ENCODE measurements at regions of chr5 and their contacts with region 1.

Region 1: GRCh38 chr5:113513384-113514288 is at the start of gene YTHDC2:
- DNase-seq: peak; percentile 88 to 90
- H3K4me3 ChIP-seq: peak within 1 kb of the TSS; percentile 78
- H3K4me3 Mint-ChIP-seq: peak within 1 kb of the TSS; percentile 80
- H3K27ac Mint-ChIP-seq: peak within 1 kb of the TSS; percentile 16
- H3K4me1 ChIP-seq: no peaks in the 10 kb centered on the region
- H3K4me1 Mint-ChIP-seq: peaks cover 6% of the 10 kb centered on the region
- H3K27me3 ChIP-seq: no peaks in the 10 kb centered on the region
- H3K27me3 Mint-ChIP-seq: peaks cover 7% of the 10 kb centered on the region
- CTCF ChIP-seq: peak in 1 of 2 experiments; percentile 17
- total RNA-seq, gene YTHDC2: 16.9 and 19.1 TPM in 2 replicates

Region 2: GRCh38 chr5:112995764-112996618 is 517.6 kb before region 1 on chr5:
- CTCF ChIA-PET with region 1: no interaction called
- POLR2A ChIA-PET with region 1: no interaction called
- intact Hi-C with region 1: loop called (anchors 2 kb)
- DNase-seq: peak; percentile 60 to 75
- H3K4me3 ChIP-seq: no peak overlapping the region
- H3K4me3 Mint-ChIP-seq: no peak overlapping the region
- H3K27ac Mint-ChIP-seq: no peak overlapping the region
- H3K4me1 ChIP-seq: no peaks in the 10 kb centered on the region
- H3K4me1 Mint-ChIP-seq: no peaks in the 10 kb centered on the region
- H3K27me3 ChIP-seq: no peaks in the 10 kb centered on the region
- H3K27me3 Mint-ChIP-seq: no peaks in the 10 kb centered on the region
- CTCF ChIP-seq: peak; percentile 81 to 90

Region 3: GRCh38 chr5:113330533-113331208 is 183.0 kb before region 1 on chr5:
- CTCF ChIA-PET with region 1: no interaction called
- POLR2A ChIA-PET with region 1: no interaction called
- intact Hi-C with region 1: loop called (anchors 2 kb)
- DNase-seq: peak in 1 of 2 experiments; percentile 33
- H3K4me3 ChIP-seq: no peak overlapping the region
- H3K4me3 Mint-ChIP-seq: no peak overlapping the region
- H3K27ac Mint-ChIP-seq: no peak overlapping the region
- H3K4me1 ChIP-seq: no peaks in the 10 kb centered on the region
- H3K4me1 Mint-ChIP-seq: no peaks in the 10 kb centered on the region
- H3K27me3 ChIP-seq: no peaks in the 10 kb centered on the region
- H3K27me3 Mint-ChIP-seq: peaks cover 11% of the 10 kb centered on the region
- CTCF ChIP-seq: peak; percentile 49 to 53

Region 4: DNA sequence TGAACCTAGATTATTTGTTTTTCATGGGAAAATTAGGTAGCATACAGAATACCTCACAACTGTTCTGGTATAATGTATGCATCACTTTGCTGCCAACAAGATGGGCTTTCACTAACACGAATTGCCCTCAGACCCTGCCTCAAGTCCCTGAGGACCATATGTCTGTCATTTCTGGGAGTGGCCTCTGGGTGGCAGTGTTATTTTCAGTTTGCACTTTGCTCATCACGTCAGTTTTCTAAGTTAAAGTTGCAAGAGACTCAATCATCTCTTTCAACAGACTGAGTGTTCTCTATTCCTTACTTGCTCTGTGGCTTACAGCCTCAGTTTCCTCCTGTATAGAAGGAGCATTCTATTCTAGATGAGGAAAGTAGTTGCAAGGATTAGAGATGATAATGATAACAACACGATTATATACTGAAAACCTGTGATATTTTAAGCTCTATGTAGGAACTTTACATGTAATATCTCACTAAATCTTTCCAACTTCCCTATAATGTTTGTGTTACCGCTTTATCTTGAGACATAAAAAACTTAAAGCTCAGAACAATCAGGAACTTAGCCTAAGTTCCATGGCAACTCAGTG is 134.6 kb before region 1 on chr5:
- CTCF ChIA-PET with region 1: no interaction called
- POLR2A ChIA-PET with region 1: no interaction called
- intact Hi-C with region 1: loop called (anchors 1 kb)
- DNase-seq: peak; percentile 53 to 60
- H3K4me3 ChIP-seq: no peak overlapping the region
- H3K4me3 Mint-ChIP-seq: no peak overlapping the region
- H3K27ac Mint-ChIP-seq: no peak overlapping the region
- H3K4me1 ChIP-seq: no peaks in the 10 kb centered on the region
- H3K4me1 Mint-ChIP-seq: no peaks in the 10 kb centered on the region
- H3K27me3 ChIP-seq: no peaks in the 10 kb centered on the region
- H3K27me3 Mint-ChIP-seq: peaks cover 16% of the 10 kb centered on the region
- CTCF ChIP-seq: peak; percentile 70 to 76

Region 5: GRCh38 chr5:113447498-113448050 is 66.1 kb before region 1 on chr5:
- CTCF ChIA-PET with region 1: interaction called, 8 read pairs
- POLR2A ChIA-PET with region 1: no interaction called
- intact Hi-C with region 1: loop called (anchors 1 kb)
- DNase-seq: peak in 1 of 2 experiments; percentile 51
- H3K4me3 ChIP-seq: no peak overlapping the region
- H3K4me3 Mint-ChIP-seq: no peak overlapping the region
- H3K27ac Mint-ChIP-seq: no peak overlapping the region
- H3K4me1 ChIP-seq: no peaks in the 10 kb centered on the region
- H3K4me1 Mint-ChIP-seq: no peaks in the 10 kb centered on the region
- H3K27me3 ChIP-seq: no peaks in the 10 kb centered on the region
- H3K27me3 Mint-ChIP-seq: peaks cover 16% of the 10 kb centered on the region
- CTCF ChIP-seq: peak; percentile 8 to 54

Region 6: GRCh38 chr5:113524927-113525326 is 11.3 kb after region 1 on chr5:
- CTCF ChIA-PET with region 1: no interaction called
- POLR2A ChIA-PET with region 1: no interaction called
- intact Hi-C with region 1: no loop called
- DNase-seq: no peak
- H3K4me3 ChIP-seq: no peak overlapping the region
- H3K4me3 Mint-ChIP-seq: no peak overlapping the region
- H3K27ac Mint-ChIP-seq: no peak overlapping the region
- H3K4me1 ChIP-seq: no peaks in the 10 kb centered on the region
- H3K4me1 Mint-ChIP-seq: no peaks in the 10 kb centered on the region
- H3K27me3 ChIP-seq: no peaks in the 10 kb centered on the region
- H3K27me3 Mint-ChIP-seq: no peaks in the 10 kb centered on the region
- CTCF ChIP-seq: no peak

Region 7: DNA sequence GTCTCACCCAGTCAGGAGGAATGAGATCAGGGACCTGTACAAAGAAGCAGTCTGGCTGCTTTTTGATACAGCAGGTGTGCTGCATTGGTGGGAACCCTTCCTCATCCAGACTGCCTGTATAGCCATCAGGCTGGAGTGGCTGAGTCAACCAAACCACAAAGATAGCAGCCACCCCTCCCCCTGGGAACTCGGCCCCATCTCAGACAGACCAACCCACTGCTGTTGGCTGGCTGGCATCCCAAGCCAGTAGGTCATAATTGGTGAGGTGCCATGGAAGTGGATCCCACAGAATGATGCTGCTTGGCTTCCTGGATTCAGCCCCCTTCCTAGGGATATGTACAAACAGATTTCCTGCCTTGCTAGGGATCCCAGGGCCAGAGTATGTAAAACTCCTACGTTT is 60.8 kb after region 1 on chr5:
- CTCF ChIA-PET with region 1: no interaction called
- POLR2A ChIA-PET with region 1: no interaction called
- intact Hi-C with region 1: no loop called
- DNase-seq: no peak
- H3K4me3 ChIP-seq: no peak overlapping the region
- H3K4me3 Mint-ChIP-seq: no peak overlapping the region
- H3K27ac Mint-ChIP-seq: no peak overlapping the region
- H3K4me1 ChIP-seq: no peaks in the 10 kb centered on the region
- H3K4me1 Mint-ChIP-seq: no peaks in the 10 kb centered on the region
- H3K27me3 ChIP-seq: no peaks in the 10 kb centered on the region
- H3K27me3 Mint-ChIP-seq: no peaks in the 10 kb centered on the region
- CTCF ChIP-seq: no peak

Region 8: DNA sequence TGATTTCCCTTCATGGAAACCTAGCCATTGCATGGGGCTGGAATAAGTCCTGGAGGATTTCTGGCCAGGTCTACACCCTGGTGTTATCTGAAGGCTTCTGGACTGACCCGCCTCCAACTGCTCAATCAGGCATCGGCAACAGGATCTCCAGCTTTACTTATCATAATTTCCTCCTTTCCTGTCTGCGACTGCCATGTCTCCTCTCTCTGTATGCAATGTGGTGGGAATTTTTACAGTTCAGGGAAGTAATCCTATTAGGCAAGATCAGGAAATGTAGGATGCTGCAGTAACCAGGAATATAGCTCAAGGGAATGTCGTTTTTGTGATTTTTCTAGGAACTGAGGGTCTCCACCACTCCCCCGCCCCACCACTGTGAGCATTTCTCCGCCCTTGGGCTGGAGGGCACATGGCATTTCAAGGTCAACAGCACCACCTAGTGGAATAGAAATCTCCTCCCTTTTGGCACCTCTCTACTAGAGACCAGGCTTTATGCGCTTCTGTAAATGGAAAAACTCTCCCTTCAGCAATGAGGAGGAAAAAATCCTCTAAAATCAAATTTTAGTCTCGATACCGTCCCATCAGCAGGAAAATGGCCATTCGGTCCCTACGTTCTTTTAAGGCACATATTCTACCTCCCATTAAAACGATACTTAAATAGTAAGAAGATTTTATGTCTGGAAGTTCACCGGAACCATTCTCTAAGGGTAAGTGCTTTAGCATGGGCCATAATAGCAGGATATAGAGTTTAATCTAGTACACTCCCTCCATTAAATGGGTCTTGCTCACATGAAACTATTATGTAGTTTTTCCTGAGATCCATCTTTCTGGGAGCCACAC is 92.9 kb after region 1 on chr5:
- CTCF ChIA-PET with region 1: interaction called, 3 read pairs
- POLR2A ChIA-PET with region 1: interaction called, 4 read pairs
- intact Hi-C with region 1: loop called (anchors 5 kb)
- DNase-seq: peak; percentile 44 to 64
- H3K4me3 ChIP-seq: no peak overlapping the region
- H3K4me3 Mint-ChIP-seq: no peak overlapping the region
- H3K27ac Mint-ChIP-seq: no peak overlapping the region
- H3K4me1 ChIP-seq: no peaks in the 10 kb centered on the region
- H3K4me1 Mint-ChIP-seq: peaks cover 1% of the 10 kb centered on the region
- H3K27me3 ChIP-seq: no peaks in the 10 kb centered on the region
- H3K27me3 Mint-ChIP-seq: peaks cover under 1% of the 10 kb centered on the region
- CTCF ChIP-seq: peak; percentile 70 to 71